Mammary epithelial cell (primary cell): ENCODE measurements at regions of chr11 and their contacts with region 1.

Region 1: DNA sequence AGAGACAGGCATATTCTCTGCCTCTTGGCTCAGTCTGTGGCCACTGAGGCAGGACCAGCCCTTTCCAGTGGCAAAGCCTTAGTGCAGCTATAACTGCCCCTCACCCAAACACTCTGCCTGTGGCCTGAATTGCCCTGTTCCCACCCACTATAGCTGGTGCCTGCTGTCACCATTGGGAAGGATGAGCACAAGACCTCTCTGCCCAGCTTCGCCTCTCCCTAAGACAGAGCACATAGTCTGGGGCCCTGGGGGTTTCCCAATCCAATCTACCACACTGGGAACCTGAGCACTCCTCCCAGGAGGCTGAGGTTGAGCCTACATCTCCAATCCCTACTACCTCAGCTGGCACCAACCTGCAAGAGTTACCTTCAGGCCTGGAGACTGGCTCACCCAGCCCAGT is 670.4 kb downstream of the JRKL start:
- DNase-seq: no peak
- H3K4me3 ChIP-seq: no peak overlapping the region
- H3K27ac ChIP-seq: no peak overlapping the region
- H3K4me1 ChIP-seq: no peaks in the 10 kb centered on the region
- H3K27me3 ChIP-seq: no peaks in the 10 kb centered on the region
- CTCF ChIP-seq: no peak

Region 2: DNA sequence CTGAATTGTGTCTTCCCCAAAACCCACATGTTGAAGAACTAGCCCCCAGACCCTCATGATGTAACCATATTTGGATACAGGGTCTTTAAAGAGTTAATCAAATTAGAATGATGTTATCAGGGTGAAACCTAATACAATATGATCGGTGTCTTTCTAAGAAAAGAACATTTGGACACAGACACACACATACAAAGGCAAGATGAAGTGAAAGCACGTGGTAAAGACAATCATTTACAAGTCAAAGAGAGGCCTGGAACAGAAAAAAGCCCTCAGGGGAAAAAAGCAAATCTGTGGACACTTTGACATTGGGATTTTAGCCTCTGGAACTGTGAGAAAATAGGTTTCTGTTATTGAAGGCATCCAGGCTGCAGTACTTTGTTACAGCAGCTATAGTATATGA is 63.1 kb after region 1 on chr11:
- CTCF ChIA-PET with region 1: no interaction called
- dilution Hi-C with region 1: no loop called
- in situ Hi-C with region 1: loop called in 1 of 2 experiments (anchors 10 kb)
- intact Hi-C with region 1: no loop called
- DNase-seq: no peak
- H3K4me3 ChIP-seq: no peak overlapping the region
- H3K27ac ChIP-seq: no peak overlapping the region
- H3K4me1 ChIP-seq: no peaks in the 10 kb centered on the region
- H3K27me3 ChIP-seq: no peaks in the 10 kb centered on the region
- CTCF ChIP-seq: no peak